PC-3 (cell line): ENCODE measurements at regions of chr13 and their contacts with region 1.

Region 1: GRCh38 chr13:38073931-38074330 is 204.4 kb upstream of the TRPC4 start:
- DNase-seq: no peak
- ATAC-seq: no peak
- H3K4me3 ChIP-seq: no peak overlapping the region
- H3K27ac ChIP-seq: no peak overlapping the region
- H3K4me1 ChIP-seq: no peaks in the 10 kb centered on the region
- H3K27me3 ChIP-seq: no peaks in the 10 kb centered on the region
- CTCF ChIP-seq: no peak

Region 2: DNA sequence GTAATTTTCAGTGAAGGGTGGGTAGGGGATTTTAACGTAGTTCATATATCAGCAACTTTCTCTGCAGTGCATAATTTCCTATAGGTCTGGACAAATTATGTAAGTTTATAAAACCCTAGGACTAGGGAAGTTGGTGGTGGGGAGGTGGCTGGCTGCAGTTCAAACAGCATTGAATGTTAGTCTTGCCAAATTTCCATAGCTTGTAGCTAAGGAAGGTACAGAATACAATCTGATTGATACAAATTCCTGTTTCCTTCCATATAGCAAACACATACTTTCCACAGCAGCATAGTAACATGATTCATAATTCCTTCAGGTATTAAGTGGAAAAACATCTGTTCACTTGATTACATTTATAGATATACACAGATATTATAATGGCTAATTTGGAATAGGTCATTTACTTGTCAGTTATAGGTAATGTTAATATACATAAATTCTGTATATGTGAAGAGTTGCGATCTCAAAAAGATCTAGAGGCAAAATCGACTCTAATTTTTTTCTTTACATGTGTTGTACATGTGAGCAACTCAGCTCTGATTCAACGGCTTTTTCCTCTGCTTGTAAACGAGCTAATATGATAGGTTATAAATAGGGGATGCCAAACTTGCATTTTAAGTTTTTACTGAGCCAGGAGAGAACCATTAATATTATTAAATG is 735.1 kb before region 1 on chr13:
- CTCF ChIA-PET with region 1: no interaction called
- POLR2A ChIA-PET with region 1: no interaction called
- intact Hi-C with region 1: no loop called
- DNase-seq: no peak
- ATAC-seq: no peak
- H3K4me3 ChIP-seq: no peak overlapping the region
- H3K27ac ChIP-seq: no peak overlapping the region
- H3K4me1 ChIP-seq: no peaks in the 10 kb centered on the region
- H3K27me3 ChIP-seq: no peaks in the 10 kb centered on the region
- CTCF ChIP-seq: no peak

Region 3: DNA sequence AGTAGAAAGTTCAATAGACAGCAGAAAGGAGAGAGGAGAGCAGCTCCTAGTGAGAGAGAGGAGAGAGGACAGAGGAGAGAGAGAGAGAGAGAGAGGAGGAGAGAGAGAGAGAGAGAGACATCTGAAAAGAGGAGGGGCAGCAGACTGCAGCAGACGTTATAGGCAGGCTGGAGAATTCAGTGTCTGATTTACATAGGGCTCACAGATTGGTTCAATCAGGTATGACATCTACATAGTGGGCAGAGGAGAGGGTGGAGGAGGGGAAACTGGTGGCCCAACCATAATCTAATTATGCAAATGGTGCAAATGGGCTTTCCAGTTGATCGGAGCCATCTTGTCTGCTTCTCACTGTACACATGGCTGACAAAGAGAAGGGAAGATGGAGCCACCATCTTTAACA is 17.0 kb after region 1 on chr13:
- CTCF ChIA-PET with region 1: no interaction called
- POLR2A ChIA-PET with region 1: no interaction called
- intact Hi-C with region 1: no loop called
- DNase-seq: no peak
- ATAC-seq: no peak
- H3K4me3 ChIP-seq: no peak overlapping the region
- H3K27ac ChIP-seq: no peak overlapping the region
- H3K4me1 ChIP-seq: no peaks in the 10 kb centered on the region
- H3K27me3 ChIP-seq: no peaks in the 10 kb centered on the region
- CTCF ChIP-seq: no peak

Region 4: DNA sequence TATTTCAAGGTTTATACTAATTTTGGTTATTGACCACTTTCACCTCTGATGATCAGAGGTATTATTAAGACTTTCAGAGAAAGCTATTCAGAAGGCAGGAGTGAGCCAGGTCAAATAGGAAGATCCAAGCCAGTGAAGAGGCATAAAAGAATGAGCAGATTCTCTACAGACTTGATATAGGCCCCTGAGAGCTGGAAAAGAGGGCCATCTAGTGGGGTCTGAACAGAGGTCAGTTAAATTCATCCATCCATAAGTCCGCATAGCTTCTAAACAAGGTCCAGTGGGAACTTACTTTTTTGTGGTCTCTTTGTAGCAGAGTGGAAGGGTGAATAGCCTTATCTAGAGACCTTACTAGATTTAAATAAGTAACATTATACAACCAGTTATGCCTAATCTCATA is 149.2 kb after region 1 on chr13:
- CTCF ChIA-PET with region 1: no interaction called
- POLR2A ChIA-PET with region 1: no interaction called
- intact Hi-C with region 1: loop called (anchors 10 kb)
- DNase-seq: peak; percentile 19
- ATAC-seq: no peak
- H3K4me3 ChIP-seq: no peak overlapping the region
- H3K27ac ChIP-seq: no peak overlapping the region
- H3K4me1 ChIP-seq: no peaks in the 10 kb centered on the region
- H3K27me3 ChIP-seq: no peaks in the 10 kb centered on the region
- CTCF ChIP-seq: peak; percentile 38; the same call in 1 of the 2 replicates

Region 5: DNA sequence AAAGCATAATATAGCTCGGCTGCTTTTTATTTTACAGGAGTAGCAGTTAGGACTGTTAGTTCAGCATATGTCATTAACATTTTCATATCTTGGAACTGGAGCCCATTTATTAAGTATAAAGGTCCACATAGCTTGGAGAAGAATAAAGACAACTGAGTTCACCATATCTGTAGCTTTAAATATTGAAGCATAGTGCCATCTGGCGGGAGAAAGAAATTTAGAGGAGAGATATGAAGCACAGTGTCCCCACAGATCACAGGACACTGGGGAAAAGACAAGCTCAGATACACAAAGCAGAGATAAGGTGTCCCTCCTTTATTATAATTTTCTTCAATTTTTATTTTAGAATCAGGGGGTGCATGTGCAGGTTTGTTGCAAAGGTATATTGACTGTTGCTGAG is 508.2 kb after region 1 on chr13:
- CTCF ChIA-PET with region 1: no interaction called
- POLR2A ChIA-PET with region 1: no interaction called
- intact Hi-C with region 1: loop called (anchors 5 kb)
- DNase-seq: peak; percentile 59
- ATAC-seq: peak; percentile 79
- H3K4me3 ChIP-seq: no peak overlapping the region
- H3K27ac ChIP-seq: no peak overlapping the region
- H3K4me1 ChIP-seq: no peaks in the 10 kb centered on the region
- H3K27me3 ChIP-seq: peaks cover 9% of the 10 kb centered on the region; the same call in 1 of the 2 replicates
- CTCF ChIP-seq: peak; percentile 63